OCI-LY7 (cell line): ENCODE measurements at regions of chr6 and their contacts with region 1.

Region 1: DNA sequence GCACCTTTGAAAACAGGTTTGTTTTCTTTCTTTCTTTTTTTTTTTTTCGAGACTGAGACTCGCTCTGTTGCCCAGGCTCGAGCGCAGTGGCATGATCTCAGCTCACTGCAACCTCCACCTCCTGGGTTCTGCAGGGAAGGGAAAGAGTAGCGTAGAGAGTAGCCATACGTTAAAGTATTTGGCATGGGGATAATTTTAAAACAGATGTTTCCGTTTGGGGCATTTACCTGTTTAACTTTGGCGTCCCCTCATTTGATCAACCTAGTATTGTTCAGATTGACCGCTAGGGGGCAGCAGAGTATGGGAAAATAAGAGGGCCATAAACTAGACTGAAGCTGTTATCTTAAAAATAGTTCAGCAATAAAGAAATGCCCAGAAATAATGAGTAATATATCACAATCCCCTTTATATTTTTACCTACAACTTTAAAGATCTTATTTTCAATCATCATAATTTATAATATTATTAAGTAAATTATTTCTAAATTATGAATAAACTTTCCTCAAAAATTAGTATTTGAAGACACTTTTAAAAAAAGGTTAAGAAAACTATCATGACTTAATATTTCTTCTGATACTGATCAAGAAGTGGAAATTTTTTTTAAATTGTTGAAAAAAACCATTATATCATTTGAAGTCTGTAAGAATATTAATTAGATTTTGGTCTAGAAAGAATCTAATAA is 7.6 kb upstream of the TAAR9 start:
- DNase-seq: peak; percentile 82
- H3K4me3 ChIP-seq: peak overlapping the region; percentile 63
- H3K27ac ChIP-seq: no peak overlapping the region
- H3K4me1 ChIP-seq: peaks cover 7% of the 10 kb centered on the region
- CTCF ChIP-seq: peak; percentile 87

Region 2: DNA sequence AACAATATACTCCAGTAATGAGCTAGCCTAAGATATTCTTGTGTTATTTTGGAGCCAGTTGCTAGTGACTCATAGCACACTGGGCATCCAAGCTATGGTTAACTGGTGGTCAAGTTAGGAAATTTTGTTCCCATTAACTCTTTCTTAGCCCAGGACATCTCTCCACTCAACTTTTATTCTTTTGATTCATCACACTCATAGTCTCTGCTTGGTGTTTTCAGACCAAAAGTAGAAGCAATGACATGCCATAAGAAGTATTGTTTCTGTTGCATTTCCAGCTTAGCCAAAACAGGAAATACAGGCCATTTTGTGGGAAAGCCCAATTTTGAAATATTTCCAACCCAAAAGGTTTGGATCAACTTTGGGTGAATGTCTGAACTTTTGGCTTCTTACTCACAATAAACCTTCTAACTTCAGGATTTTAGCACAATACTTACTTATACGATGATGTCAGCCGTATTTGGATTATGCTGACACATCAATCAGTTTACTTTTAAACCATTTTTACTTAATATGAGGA is 547.6 kb before region 1 on chr6:
- CTCF ChIA-PET with region 1: no interaction called
- POLR2A ChIA-PET with region 1: no interaction called
- intact Hi-C with region 1: no loop called
- DNase-seq: no peak
- H3K4me3 ChIP-seq: no peak overlapping the region
- H3K27ac ChIP-seq: no peak overlapping the region
- H3K4me1 ChIP-seq: no peaks in the 10 kb centered on the region
- CTCF ChIP-seq: no peak

Region 3: GRCh38 chr6:132430110-132430509 is 100.3 kb before region 1 on chr6:
- CTCF ChIA-PET with region 1: no interaction called
- POLR2A ChIA-PET with region 1: no interaction called
- intact Hi-C with region 1: no loop called
- DNase-seq: no peak
- H3K4me3 ChIP-seq: no peak overlapping the region
- H3K27ac ChIP-seq: no peak overlapping the region
- H3K4me1 ChIP-seq: no peaks in the 10 kb centered on the region
- CTCF ChIP-seq: no peak

Region 4: DNA sequence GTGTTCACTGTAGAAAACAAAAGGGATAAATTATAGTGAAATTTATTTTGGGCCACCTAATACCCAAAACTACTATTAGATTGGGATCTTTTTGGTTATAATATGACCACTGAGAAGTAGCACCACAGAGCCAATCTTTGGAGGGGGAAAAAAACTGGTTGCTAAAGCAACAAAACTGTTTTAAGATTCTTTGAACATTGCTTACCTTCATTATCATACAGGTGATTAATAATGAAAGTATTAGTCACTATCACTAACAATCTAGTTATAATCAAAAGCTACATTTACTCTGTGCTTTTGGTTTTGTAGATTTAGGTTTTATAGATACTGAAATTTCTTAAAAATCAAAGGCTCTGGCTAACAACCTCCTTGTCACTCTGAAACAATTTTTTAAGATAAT is 49.2 kb before region 1 on chr6:
- CTCF ChIA-PET with region 1: no interaction called
- POLR2A ChIA-PET with region 1: no interaction called
- intact Hi-C with region 1: no loop called
- DNase-seq: no peak
- H3K4me3 ChIP-seq: no peak overlapping the region
- H3K27ac ChIP-seq: no peak overlapping the region
- H3K4me1 ChIP-seq: peaks cover 59% of the 10 kb centered on the region
- CTCF ChIP-seq: no peak

Region 5: GRCh38 chr6:132820629-132821381 is 290.4 kb after region 1 on chr6:
- CTCF ChIA-PET with region 1: interaction called, 3 read pairs
- POLR2A ChIA-PET with region 1: no interaction called
- intact Hi-C with region 1: loop called (anchors 2 kb)
- DNase-seq: peak; percentile 31
- H3K4me3 ChIP-seq: no peak overlapping the region
- H3K27ac ChIP-seq: peak overlapping the region; percentile 30
- H3K4me1 ChIP-seq: peaks cover 36% of the 10 kb centered on the region
- CTCF ChIP-seq: no peak

Region 6: GRCh38 chr6:133553652-133554051 is 1023.2 kb after region 1 on chr6:
- CTCF ChIA-PET with region 1: no interaction called
- POLR2A ChIA-PET with region 1: no interaction called
- intact Hi-C with region 1: loop called (anchors 5 kb)
- DNase-seq: peak; percentile 37
- H3K4me3 ChIP-seq: no peak overlapping the region
- H3K27ac ChIP-seq: no peak overlapping the region
- H3K4me1 ChIP-seq: no peaks in the 10 kb centered on the region
- CTCF ChIP-seq: peak; percentile 74